Mammary epithelial cell (primary cell): ENCODE measurements at regions of chr17 and their contacts with region 1.

Region 1: GRCh38 chr17:82332669-82333278 is 792 bp downstream of the SECTM1 start:
- DNase-seq: peak; percentile 46
- H3K4me3 ChIP-seq: peak overlapping the region in 2 of 3 experiments; percentile 18 to 46
- H3K27ac ChIP-seq: no peak overlapping the region
- H3K4me1 ChIP-seq: peaks cover 46% of the 10 kb centered on the region
- H3K27me3 ChIP-seq: no peaks in the 10 kb centered on the region
- CTCF ChIP-seq: no peak

Region 2: DNA sequence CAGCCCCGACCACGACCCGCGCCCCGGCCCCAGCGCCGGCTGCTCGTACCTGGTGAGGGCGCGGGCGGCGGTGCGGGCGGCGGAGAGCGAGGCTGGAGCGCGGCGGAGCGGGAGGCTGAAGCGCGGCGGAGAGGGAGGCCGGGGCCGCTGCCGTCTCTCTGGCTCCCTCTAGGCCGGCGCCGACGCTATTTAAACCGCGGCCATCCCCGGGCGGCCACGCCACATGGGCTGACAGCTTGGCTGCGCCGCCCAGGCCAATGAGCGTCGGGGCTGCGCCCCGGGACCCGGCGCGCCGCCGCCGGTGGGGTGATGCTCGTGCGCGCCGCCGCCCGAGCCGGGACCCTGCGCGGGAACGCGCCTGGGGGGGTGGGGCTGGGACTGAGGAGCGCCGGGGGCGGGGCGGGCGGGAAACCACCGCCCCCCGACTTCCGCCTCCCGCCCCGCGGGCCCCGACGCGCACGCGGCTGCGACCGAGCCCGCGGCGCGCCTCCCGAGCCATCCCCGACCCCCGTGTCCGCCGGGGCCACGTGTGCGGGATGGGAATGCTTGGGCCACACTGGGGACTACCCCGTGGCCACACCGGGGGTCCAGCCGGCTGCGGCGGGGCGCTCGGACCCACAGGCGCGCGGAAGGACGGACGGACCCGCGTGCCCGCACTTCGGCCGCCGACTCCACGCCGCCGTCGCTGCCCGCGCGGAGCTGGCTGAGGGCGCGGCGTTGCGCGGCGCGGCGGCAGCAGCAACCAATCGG is 234.5 kb before region 1 on chr17 and contains the start of gene FASN:
- CTCF ChIA-PET with region 1: no interaction called
- dilution Hi-C with region 1: no loop called
- in situ Hi-C with region 1: no loop called
- intact Hi-C with region 1: no loop called
- DNase-seq: peak; percentile 93
- H3K4me3 ChIP-seq: peak within 1 kb of the TSS; percentile 63 to 82 (median 68)
- H3K27ac ChIP-seq: peak within 1 kb of the TSS; percentile 76
- H3K4me1 ChIP-seq: peaks cover 38% of the 10 kb centered on the region
- H3K27me3 ChIP-seq: no peaks in the 10 kb centered on the region
- CTCF ChIP-seq: peak; percentile 26 to 57
- total RNA-seq, gene FASN: 126 to 452 TPM

Region 3: DNA sequence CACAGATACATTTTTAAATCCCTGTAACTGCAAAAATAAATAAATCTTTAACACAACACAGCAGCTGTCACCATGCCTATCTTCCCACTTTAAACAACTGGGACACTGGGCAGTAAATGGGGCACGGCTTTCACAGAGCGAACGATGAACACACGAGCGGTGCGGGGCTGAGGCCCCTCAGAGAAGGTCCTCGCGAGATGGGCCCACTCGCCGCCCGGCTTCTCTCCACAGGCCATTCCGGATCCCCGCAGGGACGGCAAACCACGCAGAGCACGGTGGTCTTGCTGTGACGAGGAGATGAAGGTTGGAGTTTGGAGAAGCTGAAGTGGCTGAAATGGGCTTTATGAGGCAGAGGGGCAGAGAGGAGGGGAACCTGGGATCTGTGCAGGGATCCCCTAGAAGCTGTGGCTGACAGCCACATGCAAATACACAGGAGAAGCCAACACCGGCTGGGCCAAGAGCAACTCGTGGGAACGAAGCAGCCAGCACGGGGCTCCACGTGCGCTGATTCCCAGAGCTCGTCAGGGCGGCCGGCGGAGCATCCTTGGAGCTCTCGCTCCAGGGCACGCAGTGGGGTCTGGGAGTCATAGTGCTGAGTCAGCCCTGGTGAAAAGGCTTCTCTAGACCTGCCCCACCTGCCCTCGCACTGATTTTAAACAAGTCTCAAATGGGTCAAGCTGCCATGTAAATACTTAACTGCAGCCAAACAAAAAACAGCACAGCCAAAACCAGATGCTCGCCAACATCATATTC is 151.8 kb before region 1 on chr17:
- CTCF ChIA-PET with region 1: no interaction called
- dilution Hi-C with region 1: no loop called
- in situ Hi-C with region 1: no loop called
- intact Hi-C with region 1: no loop called
- DNase-seq: no peak
- H3K4me3 ChIP-seq: no peak overlapping the region
- H3K27ac ChIP-seq: no peak overlapping the region
- H3K4me1 ChIP-seq: no peaks in the 10 kb centered on the region
- H3K27me3 ChIP-seq: no peaks in the 10 kb centered on the region
- CTCF ChIP-seq: no peak

Region 4: DNA sequence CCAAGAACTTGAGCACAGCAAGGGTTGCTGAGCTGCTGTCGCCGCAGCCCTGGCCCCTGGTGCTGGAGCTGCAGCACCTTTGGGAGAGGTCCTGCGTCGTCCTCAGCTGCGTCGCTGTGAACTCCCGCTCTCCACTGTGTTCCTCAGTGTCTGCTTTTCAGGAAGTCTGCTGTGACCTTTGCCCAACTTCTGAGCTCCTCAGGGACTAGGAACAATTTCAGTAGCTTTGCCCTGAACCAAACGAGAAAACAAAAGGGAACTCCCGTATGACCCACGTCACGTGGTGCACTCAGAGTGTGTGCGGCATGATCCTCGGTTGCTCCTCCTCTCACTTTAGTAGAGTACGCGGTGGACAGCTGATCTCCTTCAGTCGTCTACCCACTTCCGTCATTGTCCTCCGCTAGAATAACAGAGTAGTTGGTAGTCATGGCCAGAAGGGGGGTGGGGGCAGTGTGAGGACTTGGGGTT is 271.2 kb after region 1 on chr17:
- CTCF ChIA-PET with region 1: no interaction called
- dilution Hi-C with region 1: loop called (anchors 10 kb)
- in situ Hi-C with region 1: no loop called
- intact Hi-C with region 1: no loop called
- DNase-seq: no peak
- H3K4me3 ChIP-seq: no peak overlapping the region
- H3K27ac ChIP-seq: no peak overlapping the region
- H3K4me1 ChIP-seq: peaks cover 12% of the 10 kb centered on the region
- H3K27me3 ChIP-seq: no peaks in the 10 kb centered on the region
- CTCF ChIP-seq: no peak